Dorsolateral prefrontal cortex (tissue), 120 donors: ENCODE measurements at regions of chr7 and their contacts with region 1.

Region 1: GRCh38 chr7:131424219-131424822 is 96.6 kb downstream of the MKLN1 start:
- DNase-seq: no peak
- H3K4me3 ChIP-seq: no peak overlapping the region
- H3K27ac ChIP-seq: peak overlapping the region in 57 of 59 donors; percentile 13 to 94 (median 85)
- H3K27me3 ChIP-seq: no peaks in the 10 kb centered on the region
- CTCF ChIP-seq: peak; percentile 59 to 90 (median 79)

Region 2: GRCh38 chr7:131327626-131328376 is 96.5 kb before region 1 on chr7 and contains the start of gene MKLN1:
- intact Hi-C with region 1: loop called (anchors 2 to 5 kb)
- DNase-seq: peak; percentile 82 to 94 (median 89)
- H3K4me3 ChIP-seq: peak within 1 kb of the TSS; percentile 63 to 100 (median 94)
- H3K27ac ChIP-seq: peak within 1 kb of the TSS; percentile 89 to 100 (median 98)
- H3K27me3 ChIP-seq: no peaks in the 10 kb centered on the region
- CTCF ChIP-seq: peak in 22 of 56 donors; percentile 6 to 53 (median 24)
- total RNA-seq, gene MKLN1: 68.7 to 162 (median 107) TPM